ENCODE measurements at regions of chr14 and their contacts with region 1.

Region 1: GRCh38 chr14:24431569-24432258 is 2.0 kb downstream of the KHNYN start:
- DNase-seq: peak; percentile 81 to 91 (median 83)
- H3K4me3 ChIP-seq: peak overlapping the region; percentile 82
- H3K4me3 Mint-ChIP-seq: peak overlapping the region; percentile 89 to 95 (median 91)
- H3K27ac ChIP-seq: no peak overlapping the region
- H3K27ac Mint-ChIP-seq: peak overlapping the region; percentile 77 to 97 (median 94)
- H3K4me1 ChIP-seq: peaks cover 48% of the 10 kb centered on the region
- H3K4me1 Mint-ChIP-seq: peaks cover 29 to 55% (median 39%) of the 10 kb centered on the region in 3 donors
- H3K27me3 ChIP-seq: no peaks in the 10 kb centered on the region
- H3K27me3 Mint-ChIP-seq: no peaks in the 10 kb centered on the region

Region 2: GRCh38 chr14:24108336-24108874 is 323.3 kb before region 1 on chr14:
- CTCF ChIA-PET with region 1: interaction called, 11 read pairs
- POLR2A ChIA-PET with region 1: no interaction called
- DNase-seq: no peak
- H3K4me3 ChIP-seq: no peak overlapping the region
- H3K4me3 Mint-ChIP-seq: peak overlapping the region in 2 of 7 donors; percentile 4 to 56
- H3K27ac ChIP-seq: no peak overlapping the region
- H3K27ac Mint-ChIP-seq: peak overlapping the region; percentile 79 to 97 (median 94)
- H3K4me1 ChIP-seq: peaks cover 15% of the 10 kb centered on the region
- H3K4me1 Mint-ChIP-seq: peaks cover 9 to 14% (median 10%) of the 10 kb centered on the region in 3 donors
- H3K27me3 ChIP-seq: no peaks in the 10 kb centered on the region
- H3K27me3 Mint-ChIP-seq: no peaks in the 10 kb centered on the region

Region 3: GRCh38 chr14:24271134-24271833 is 160.4 kb before region 1 on chr14 and contains the start of gene RABGGTA:
- CTCF ChIA-PET with region 1: interaction called, 10 read pairs
- POLR2A ChIA-PET with region 1: interaction called, 10 read pairs
- DNase-seq: peak; percentile 87 to 98 (median 96)
- H3K4me3 ChIP-seq: peak within 1 kb of the TSS; percentile 63
- H3K4me3 Mint-ChIP-seq: peak within 1 kb of the TSS; percentile 88 to 93 (median 92)
- H3K27ac ChIP-seq: peak within 1 kb of the TSS; percentile 86
- H3K27ac Mint-ChIP-seq: peak within 1 kb of the TSS; percentile 96 to 99 (median 98)
- H3K4me1 ChIP-seq: peaks cover 30% of the 10 kb centered on the region
- H3K4me1 Mint-ChIP-seq: peaks cover 37 to 44% (median 41%) of the 10 kb centered on the region in 3 donors
- H3K27me3 ChIP-seq: no peaks in the 10 kb centered on the region
- H3K27me3 Mint-ChIP-seq: peaks cover 0 to 5% of the 10 kb centered on the region in 2 donors
- total RNA-seq, gene RABGGTA: 41.0 to 41.8 TPM

Region 4: GRCh38 chr14:24310646-24311604 is 120.8 kb before region 1 on chr14 and contains the start of gene LTB4R:
- CTCF ChIA-PET with region 1: interaction called, 48 read pairs
- POLR2A ChIA-PET with region 1: interaction called, 20 read pairs
- DNase-seq: peak; percentile 56 to 82 (median 74)
- H3K4me3 ChIP-seq: peak within 1 kb of the TSS; percentile 58
- H3K4me3 Mint-ChIP-seq: peak within 1 kb of the TSS; percentile 79 to 89 (median 86)
- H3K27ac ChIP-seq: peak within 1 kb of the TSS; percentile 69
- H3K27ac Mint-ChIP-seq: peak within 1 kb of the TSS; percentile 89 to 99 (median 96)
- H3K4me1 ChIP-seq: peaks cover 66% of the 10 kb centered on the region
- H3K4me1 Mint-ChIP-seq: peaks cover 68 to 77% (median 71%) of the 10 kb centered on the region in 3 donors
- H3K27me3 ChIP-seq: no peaks in the 10 kb centered on the region
- H3K27me3 Mint-ChIP-seq: peaks cover 0 to 2% of the 10 kb centered on the region in 2 donors
- total RNA-seq, gene LTB4R: 9.8 to 12.3 TPM

Region 5: DNA sequence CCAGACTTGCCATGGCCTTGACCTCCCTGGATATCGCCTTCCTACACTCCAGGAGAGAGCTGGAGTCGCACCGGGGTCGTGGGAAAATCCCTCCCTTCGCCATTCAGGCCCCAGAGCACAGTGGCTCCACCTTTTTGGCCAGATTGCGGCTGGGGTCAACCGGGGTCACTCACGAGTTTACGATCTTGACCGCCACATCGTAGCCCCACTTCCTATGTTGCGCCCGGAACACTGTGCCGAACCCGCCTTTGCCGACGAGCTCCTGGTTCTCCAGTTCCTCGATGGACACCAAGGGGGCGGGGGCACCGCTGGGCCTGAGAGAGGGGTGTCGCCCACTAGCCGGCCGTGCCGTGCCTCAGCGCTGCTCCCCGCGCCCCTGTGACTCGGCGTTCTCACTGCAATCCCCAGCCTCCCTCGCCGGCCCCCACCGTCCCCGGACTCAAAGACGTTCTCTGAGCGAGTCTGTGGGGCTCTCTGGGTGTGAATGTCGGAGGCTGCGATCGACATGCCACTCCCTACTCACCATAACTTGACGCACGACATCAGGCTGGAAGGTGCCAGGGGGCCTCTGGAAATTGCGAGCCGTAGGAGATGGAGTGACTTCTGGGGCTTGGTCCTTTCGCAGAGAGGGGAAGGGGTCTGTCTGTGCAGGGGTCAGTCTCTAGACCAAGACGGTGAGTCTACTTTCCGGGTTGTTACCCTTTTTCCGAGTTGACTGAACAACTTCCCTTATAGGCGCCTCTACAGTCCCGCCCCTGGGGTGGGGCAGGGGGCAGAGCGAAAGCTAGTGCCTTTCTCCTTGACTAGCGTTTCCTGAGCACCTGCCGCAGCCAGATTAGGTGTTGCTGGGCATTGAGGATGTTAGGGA is 92.2 kb before region 1 on chr14 and contains the start of gene RIPK3:
- CTCF ChIA-PET with region 1: interaction called, 486 read pairs
- POLR2A ChIA-PET with region 1: interaction called, 78 read pairs
- DNase-seq: peak; percentile 50 to 75 (median 57)
- H3K4me3 ChIP-seq: peak within 1 kb of the TSS; percentile 92
- H3K4me3 Mint-ChIP-seq: peak within 1 kb of the TSS; percentile 95 to 97 (median 97)
- H3K27ac ChIP-seq: peak within 1 kb of the TSS; percentile 60
- H3K27ac Mint-ChIP-seq: peak within 1 kb of the TSS; percentile 55 to 96 (median 93)
- H3K4me1 ChIP-seq: peaks cover 31% of the 10 kb centered on the region
- H3K4me1 Mint-ChIP-seq: peaks cover 29 to 50% (median 43%) of the 10 kb centered on the region in 3 donors
- H3K27me3 ChIP-seq: peaks cover 10% of the 10 kb centered on the region
- H3K27me3 Mint-ChIP-seq: peaks cover 15 to 19% of the 10 kb centered on the region in 2 donors
- total RNA-seq, gene RIPK3: 11.6 to 12.5 TPM

Region 6: GRCh38 chr14:24442273-24443052 is 10.7 kb after region 1 on chr14 and contains the start of gene SDR39U1:
- CTCF ChIA-PET with region 1: interaction called, 49 read pairs
- POLR2A ChIA-PET with region 1: interaction called, 54 read pairs
- DNase-seq: peak; percentile 93 to 99 (median 96)
- H3K4me3 ChIP-seq: peak within 1 kb of the TSS; percentile 96
- H3K4me3 Mint-ChIP-seq: peak within 1 kb of the TSS; percentile 88 to 99 (median 96)
- H3K27ac ChIP-seq: peak within 1 kb of the TSS; percentile 97
- H3K27ac Mint-ChIP-seq: peak within 1 kb of the TSS; percentile 93 to 99 (median 98)
- H3K4me1 ChIP-seq: peaks cover 25% of the 10 kb centered on the region
- H3K4me1 Mint-ChIP-seq: peaks cover 34 to 54% (median 48%) of the 10 kb centered on the region in 3 donors
- H3K27me3 ChIP-seq: no peaks in the 10 kb centered on the region
- H3K27me3 Mint-ChIP-seq: peaks cover 0 to 4% of the 10 kb centered on the region in 2 donors
- total RNA-seq, gene SDR39U1: 58.1 to 59.6 TPM

Measured in CD8-positive, alpha-beta memory T cell (primary cell).